ENCODE measurements at regions of chr15 and their contacts with region 1.

Region 1: GRCh38 chr15:45187894-45188830 is at the start of gene SHF:
- DNase-seq: peak; percentile 69
- ATAC-seq: peak; percentile 77
- H3K4me3 Mint-ChIP-seq: peak within 1 kb of the TSS; percentile 91
- H3K27ac Mint-ChIP-seq: no peak within 1 kb of the TSS; the same call in 1 of the 2 replicates
- H3K4me1 Mint-ChIP-seq: peaks cover 40% of the 10 kb centered on the region
- H3K27me3 Mint-ChIP-seq: peaks cover 34% of the 10 kb centered on the region
- CTCF ChIP-seq: no peak
- total RNA-seq, gene SHF: 30.6 to 33.1 TPM (median 31.0 TPM) in 3 replicates

Region 2: GRCh38 chr15:45198337-45199135 is 10.4 kb after region 1 on chr15:
- CTCF ChIA-PET with region 1: interaction called, 11 read pairs
- POLR2A ChIA-PET with region 1: interaction called, 6 read pairs
- DNase-seq: peak; percentile 90
- ATAC-seq: peak; percentile 62
- H3K4me3 Mint-ChIP-seq: no peak overlapping the region
- H3K27ac Mint-ChIP-seq: peak overlapping the region; percentile 87
- H3K4me1 Mint-ChIP-seq: peaks cover 7% of the 10 kb centered on the region
- H3K27me3 Mint-ChIP-seq: peaks cover 4% of the 10 kb centered on the region
- CTCF ChIP-seq: peak; percentile 46

Region 3: DNA sequence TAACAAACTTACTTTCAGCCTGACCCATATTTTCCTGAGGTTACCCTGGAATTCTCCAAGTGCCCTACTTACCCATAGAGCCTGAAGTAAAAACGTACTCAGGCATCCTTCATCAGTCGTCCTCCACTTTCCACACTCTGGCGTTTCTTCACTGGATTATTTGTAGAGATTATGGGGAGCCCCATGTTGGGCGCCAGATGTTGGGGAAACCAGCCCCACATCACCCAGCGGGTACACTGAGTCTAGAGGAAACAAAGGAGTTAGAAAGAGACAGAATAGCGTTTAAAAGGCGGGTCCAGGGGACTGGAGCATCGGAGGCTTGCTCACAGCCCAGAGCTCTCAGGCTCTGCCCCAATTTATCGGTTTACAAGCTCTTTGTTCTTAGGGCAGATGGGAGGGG is 54.1 kb after region 1 on chr15:
- CTCF ChIA-PET with region 1: no interaction called
- POLR2A ChIA-PET with region 1: no interaction called
- DNase-seq: no peak
- ATAC-seq: no peak
- H3K4me3 Mint-ChIP-seq: no peak overlapping the region
- H3K27ac Mint-ChIP-seq: no peak overlapping the region
- H3K4me1 Mint-ChIP-seq: peaks cover under 1% of the 10 kb centered on the region; the same call in 1 of the 2 replicates
- H3K27me3 Mint-ChIP-seq: peaks cover 26% of the 10 kb centered on the region
- CTCF ChIP-seq: no peak